Ascending aorta (tissue), 2 donors: ENCODE measurements at regions of chr16 and their contacts with region 1.

Region 1: GRCh38 chr16:4232541-4233386 is 9.1 kb downstream of the SRL start:
- DNase-seq: no peak
- H3K4me3 ChIP-seq: no peak overlapping the region
- H3K27ac ChIP-seq: no peak overlapping the region
- H3K4me1 ChIP-seq: no peaks in the 10 kb centered on the region
- H3K27me3 ChIP-seq: no peaks in the 10 kb centered on the region
- CTCF ChIP-seq: no peak

Region 2: GRCh38 chr16:4160658-4161430 is 71.9 kb before region 1 on chr16:
- intact Hi-C with region 1: loop called (anchors 10 kb)
- DNase-seq: no peak
- H3K4me3 ChIP-seq: no peak overlapping the region
- H3K27ac ChIP-seq: no peak overlapping the region
- H3K4me1 ChIP-seq: no peaks in the 10 kb centered on the region
- H3K27me3 ChIP-seq: no peaks in the 10 kb centered on the region
- CTCF ChIP-seq: no peak

Region 3: DNA sequence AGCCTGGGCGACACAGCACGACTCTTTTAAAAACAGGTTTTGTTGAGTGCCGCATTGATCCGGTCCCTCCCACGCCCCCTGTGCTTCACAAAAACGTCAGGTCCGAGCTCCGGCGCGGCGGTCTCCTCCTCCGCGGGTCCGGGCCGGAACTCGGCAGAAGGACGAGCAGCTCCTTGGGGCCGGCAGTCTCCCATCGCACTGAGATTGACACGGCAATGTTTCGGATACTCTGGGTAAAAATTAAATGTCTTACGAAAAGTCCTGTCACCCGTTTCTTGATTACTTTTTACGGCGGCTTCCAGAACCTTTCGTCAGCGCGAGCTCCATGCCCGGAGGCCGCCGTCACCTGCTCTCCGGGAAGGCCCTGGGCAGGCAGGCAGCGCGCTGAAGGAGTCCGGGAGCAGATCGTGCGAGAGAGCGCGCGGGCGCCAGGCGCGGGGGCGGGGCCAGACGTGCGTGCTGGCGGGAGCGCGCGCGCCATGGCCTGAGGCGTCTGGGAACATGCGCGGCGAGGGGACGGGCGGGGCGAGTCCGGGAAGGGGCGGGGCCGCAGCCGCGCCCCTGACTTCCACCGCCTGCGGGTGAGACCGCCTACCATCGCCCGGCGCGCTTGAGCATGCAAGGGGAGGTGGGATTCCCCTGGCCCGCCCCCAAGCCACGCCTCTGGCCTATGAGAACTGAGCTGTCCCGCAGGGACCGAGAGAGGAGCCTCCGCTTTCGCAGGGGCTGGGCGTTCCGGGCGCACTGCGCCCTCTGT is 20.8 kb after region 1 on chr16:
- intact Hi-C with region 1: no loop called
- DNase-seq: peak; percentile 99 to 100
- H3K4me3 ChIP-seq: peak overlapping the region; percentile 63 to 65
- H3K27ac ChIP-seq: peak overlapping the region; percentile 90 to 91
- H3K4me1 ChIP-seq: no peaks in the 10 kb centered on the region
- H3K27me3 ChIP-seq: no peaks in the 10 kb centered on the region
- CTCF ChIP-seq: no peak